Right ventricle myocardium superior (tissue), 1 donor: ENCODE measurements at regions of chr2 and their contacts with region 1.

Region 1: GRCh38 chr2:50143822-50144575 is 887.9 kb downstream of the NRXN1 start:
- DNase-seq: no peak
- ATAC-seq: peak; percentile 96

Region 2: DNA sequence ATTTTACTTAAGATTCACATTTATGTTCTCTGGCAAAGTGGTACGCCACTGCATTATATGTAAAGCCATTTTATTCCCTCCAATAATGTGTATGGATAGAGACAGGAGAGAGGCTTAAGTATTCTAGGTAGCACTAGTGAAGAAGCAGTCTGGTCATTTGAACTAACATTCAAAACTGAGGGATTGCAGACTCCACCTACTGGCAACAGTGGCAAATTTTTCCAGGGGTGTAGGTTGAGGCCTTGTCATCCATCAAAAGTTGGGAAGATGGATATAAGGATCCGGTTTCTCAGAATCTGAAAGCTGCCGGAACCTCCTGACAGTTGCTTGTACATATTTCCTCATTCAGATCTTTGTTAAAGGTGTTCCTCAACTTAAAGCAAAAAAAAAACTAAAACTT is 524.2 kb before region 1 on chr2:
- intact Hi-C with region 1: loop called (anchors 10 kb)
- DNase-seq: no peak
- ATAC-seq: no peak

Region 3: DNA sequence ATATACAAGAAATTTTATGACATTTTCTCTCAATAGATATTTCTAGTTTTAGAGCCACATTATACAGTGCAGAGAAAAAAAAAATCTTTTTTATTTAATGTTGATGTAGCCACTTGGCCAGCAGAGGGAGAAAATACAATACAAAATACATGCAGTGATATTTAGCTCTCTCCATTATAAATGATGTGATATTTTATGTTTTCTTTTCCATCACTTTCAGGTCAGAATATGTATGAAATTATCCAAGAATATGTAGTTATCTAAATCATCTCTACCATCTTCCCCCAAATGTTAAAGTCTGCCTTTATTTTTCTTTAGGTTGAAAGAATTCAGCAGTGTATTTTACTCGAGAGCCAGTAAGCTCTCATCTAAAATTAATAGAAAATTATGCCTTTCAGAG is 456.1 kb before region 1 on chr2:
- intact Hi-C with region 1: loop called (anchors 10 kb)
- DNase-seq: no peak
- ATAC-seq: peak; percentile 49

Region 4: GRCh38 chr2:50018939-50019338 is 125.1 kb before region 1 on chr2:
- intact Hi-C with region 1: no loop called
- DNase-seq: no peak
- ATAC-seq: no peak